Endothelial cell of umbilical vein (primary cell): ENCODE measurements at regions of chr5 and their contacts with region 1.

Region 1: GRCh38 chr5:38666668-38667498 is 110.4 kb upstream of the LIFR start:
- DNase-seq: peak; percentile 67
- H3K4me3 ChIP-seq: no peak overlapping the region
- H3K27ac ChIP-seq: no peak overlapping the region
- H3K4me1 ChIP-seq: peaks cover 5% of the 10 kb centered on the region
- H3K27me3 ChIP-seq: no peaks in the 10 kb centered on the region
- CTCF ChIP-seq: peak; percentile 65 to 82
- POLR2A ChIP-seq: no peak

Region 2: GRCh38 chr5:38117784-38118479 is 549.0 kb before region 1 on chr5:
- CTCF ChIA-PET with region 1: no interaction called
- POLR2A ChIA-PET with region 1: no interaction called
- dilution Hi-C with region 1: no loop called
- intact Hi-C with region 1: no loop called
- DNase-seq: no peak
- H3K4me3 ChIP-seq: no peak overlapping the region
- H3K27ac ChIP-seq: no peak overlapping the region
- H3K4me1 ChIP-seq: no peaks in the 10 kb centered on the region
- H3K27me3 ChIP-seq: no peaks in the 10 kb centered on the region
- CTCF ChIP-seq: no peak
- POLR2A ChIP-seq: no peak

Region 3: GRCh38 chr5:38265546-38266179 is 401.2 kb before region 1 on chr5:
- CTCF ChIA-PET with region 1: interaction called, 3 read pairs
- POLR2A ChIA-PET with region 1: no interaction called
- dilution Hi-C with region 1: no loop called
- intact Hi-C with region 1: loop called (anchors 5 kb)
- DNase-seq: peak; percentile 56
- H3K4me3 ChIP-seq: no peak overlapping the region
- H3K27ac ChIP-seq: no peak overlapping the region
- H3K4me1 ChIP-seq: no peaks in the 10 kb centered on the region
- H3K27me3 ChIP-seq: peaks cover 19 to 26% of the 10 kb centered on the region in 2 experiments
- CTCF ChIP-seq: peak; percentile 73 to 78
- POLR2A ChIP-seq: no peak

Region 4: DNA sequence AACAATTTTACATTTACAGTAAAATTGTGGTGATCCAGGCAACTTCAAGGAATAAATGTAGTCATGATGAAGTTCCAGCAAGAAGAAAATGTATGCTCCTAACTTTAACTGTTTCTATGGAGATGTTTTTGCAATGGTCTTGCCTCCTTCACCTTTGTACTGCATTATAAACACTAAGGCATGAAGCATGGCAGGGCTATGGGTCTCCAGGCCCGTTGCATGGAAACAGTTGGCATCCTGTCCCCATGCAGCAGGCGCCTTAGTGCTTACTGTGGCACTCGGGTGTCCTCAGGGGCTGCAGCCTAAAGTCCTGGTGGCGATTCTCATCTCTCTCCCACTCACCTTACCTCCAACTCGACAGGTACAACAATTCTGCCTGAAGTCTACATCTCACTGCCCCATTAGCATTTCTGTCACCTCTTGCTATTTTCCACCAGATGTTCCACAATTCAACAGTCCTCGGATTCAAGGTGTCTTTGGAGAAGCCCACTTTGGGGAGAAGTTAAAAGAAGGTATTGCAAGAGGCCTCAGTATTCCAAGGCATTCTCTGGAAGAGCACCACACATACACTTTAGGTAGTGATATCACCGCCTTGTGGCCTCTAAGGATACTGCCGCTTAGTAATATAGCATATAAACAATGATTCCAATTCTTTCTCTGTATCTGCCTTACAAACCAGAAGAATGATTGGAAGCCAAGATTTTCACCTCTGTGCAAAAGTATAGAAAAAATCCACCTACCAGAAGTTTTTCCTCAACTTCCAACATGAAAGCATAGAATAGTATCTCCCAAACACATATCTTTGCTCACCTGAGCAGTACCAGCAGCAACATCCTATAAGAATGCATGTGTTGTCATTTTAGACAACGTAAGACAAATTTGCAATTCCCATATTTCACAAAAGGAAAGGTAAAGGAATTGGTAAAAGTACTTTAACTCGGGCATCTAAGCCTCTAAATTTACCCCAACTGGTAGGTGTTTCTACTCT is 115.6 kb before region 1 on chr5:
- CTCF ChIA-PET with region 1: interaction called, 5 read pairs
- POLR2A ChIA-PET with region 1: no interaction called
- dilution Hi-C with region 1: no loop called
- intact Hi-C with region 1: loop called (anchors 1 kb)
- DNase-seq: peak; percentile 59
- H3K4me3 ChIP-seq: no peak overlapping the region
- H3K27ac ChIP-seq: no peak overlapping the region
- H3K4me1 ChIP-seq: peaks cover 27% of the 10 kb centered on the region
- H3K27me3 ChIP-seq: no peaks in the 10 kb centered on the region
- CTCF ChIP-seq: peak; percentile 57 to 61
- POLR2A ChIP-seq: no peak

Region 5: DNA sequence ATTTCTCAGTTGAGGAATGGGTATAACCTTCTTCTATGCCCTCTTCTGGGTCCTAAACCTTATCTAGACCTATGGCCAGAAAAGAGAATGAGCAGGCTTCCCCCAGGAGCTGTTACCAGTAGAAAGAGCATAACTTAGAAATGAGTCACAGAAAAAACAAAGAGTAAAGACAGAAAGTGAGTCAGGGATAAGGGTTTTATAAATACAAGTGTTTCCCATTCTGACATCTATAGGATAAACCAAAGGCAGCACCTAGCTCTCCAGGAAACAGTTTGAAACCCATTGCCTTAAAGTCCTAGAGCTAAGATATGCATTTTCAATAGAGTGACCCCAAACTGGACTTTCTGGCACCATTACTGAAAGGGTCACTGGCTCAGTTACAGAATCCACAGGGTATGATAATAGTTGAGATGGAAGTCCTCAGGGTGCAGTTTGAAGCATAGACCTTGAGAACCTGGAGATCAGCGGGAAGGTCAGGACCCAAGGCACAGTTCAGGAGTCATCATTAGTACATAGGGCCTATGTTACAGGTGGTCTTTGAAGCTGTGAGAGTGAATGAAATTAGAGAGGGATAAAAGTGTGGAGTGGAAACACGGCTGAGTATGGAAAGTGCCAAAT is 67.8 kb before region 1 on chr5:
- CTCF ChIA-PET with region 1: interaction called, 3 read pairs
- POLR2A ChIA-PET with region 1: no interaction called
- dilution Hi-C with region 1: no loop called
- intact Hi-C with region 1: loop called (anchors 1 kb)
- DNase-seq: peak; percentile 87
- H3K4me3 ChIP-seq: no peak overlapping the region
- H3K27ac ChIP-seq: peak overlapping the region; percentile 66
- H3K4me1 ChIP-seq: peaks cover 59% of the 10 kb centered on the region
- H3K27me3 ChIP-seq: no peaks in the 10 kb centered on the region
- CTCF ChIP-seq: no peak
- POLR2A ChIP-seq: no peak

Region 6: GRCh38 chr5:38922199-38922598 is 255.3 kb after region 1 on chr5:
- CTCF ChIA-PET with region 1: no interaction called
- POLR2A ChIA-PET with region 1: no interaction called
- dilution Hi-C with region 1: no loop called
- intact Hi-C with region 1: loop called (anchors 1 kb)
- DNase-seq: peak; percentile 65
- H3K4me3 ChIP-seq: no peak overlapping the region
- H3K27ac ChIP-seq: no peak overlapping the region
- H3K4me1 ChIP-seq: no peaks in the 10 kb centered on the region
- H3K27me3 ChIP-seq: peaks cover 0 to 3% of the 10 kb centered on the region in 2 experiments
- CTCF ChIP-seq: peak; percentile 87 to 88
- POLR2A ChIP-seq: no peak

Region 7: GRCh38 chr5:39992617-39993203 is 1325.8 kb after region 1 on chr5:
- CTCF ChIA-PET with region 1: no interaction called
- POLR2A ChIA-PET with region 1: no interaction called
- dilution Hi-C with region 1: no loop called
- intact Hi-C with region 1: no loop called
- DNase-seq: no peak
- H3K4me3 ChIP-seq: no peak overlapping the region
- H3K27ac ChIP-seq: no peak overlapping the region
- H3K4me1 ChIP-seq: no peaks in the 10 kb centered on the region
- H3K27me3 ChIP-seq: no peaks in the 10 kb centered on the region
- CTCF ChIP-seq: no peak
- POLR2A ChIP-seq: no peak